ENCODE measurements at regions of chr2 and their contacts with region 1.

Region 1: DNA sequence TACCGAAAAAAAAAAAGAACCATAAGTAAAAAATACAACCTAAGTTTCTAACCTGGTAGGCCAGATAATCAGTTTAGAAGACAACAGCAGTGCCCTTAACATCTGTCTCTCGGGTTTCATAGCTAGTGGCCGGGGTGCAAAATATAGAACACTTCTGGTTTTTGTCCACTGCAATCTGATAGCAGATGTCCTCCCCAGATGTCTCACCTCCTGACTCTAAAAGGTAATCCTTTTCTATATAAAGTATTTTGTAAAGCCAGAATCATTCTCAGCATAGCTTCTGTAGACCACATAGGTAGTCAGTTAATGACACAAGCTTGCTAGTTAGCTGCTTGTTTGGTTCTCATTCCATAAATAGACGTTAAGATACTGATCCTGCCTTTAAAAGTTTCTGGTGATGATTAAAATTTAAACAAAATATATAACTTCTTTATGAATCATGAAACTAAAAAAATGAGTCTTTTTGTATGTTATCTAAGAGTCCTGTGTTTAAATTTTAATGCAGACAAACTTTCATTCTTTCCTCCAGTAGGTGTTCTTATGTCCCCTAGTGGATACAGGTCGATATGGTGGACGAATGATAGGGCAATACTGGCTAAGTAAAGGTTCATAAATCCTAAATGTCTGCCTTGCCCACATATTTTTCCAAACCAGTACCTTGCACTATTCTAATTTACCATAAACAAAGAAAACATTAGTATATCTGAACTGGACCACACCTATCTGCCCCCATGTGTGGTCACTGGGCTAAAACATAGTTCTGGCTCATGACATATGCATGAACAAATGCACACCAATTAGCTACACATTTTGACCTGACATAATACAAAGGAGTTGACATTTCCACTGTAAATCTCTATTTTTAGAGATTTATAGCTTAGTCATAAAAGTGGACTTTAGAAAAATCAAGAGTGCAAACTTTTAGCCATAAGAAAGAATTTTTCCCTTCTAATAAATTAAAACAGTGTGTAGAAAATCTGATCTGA is 171.0 kb downstream of the SRBD1 start:
- DNase-seq: no peak
- H3K4me3 ChIP-seq: no peak overlapping the region
- H3K27ac ChIP-seq: no peak overlapping the region
- H3K4me1 ChIP-seq: no peaks in the 10 kb centered on the region
- H3K27me3 ChIP-seq: no peaks in the 10 kb centered on the region
- CTCF ChIP-seq: no peak

Region 2: DNA sequence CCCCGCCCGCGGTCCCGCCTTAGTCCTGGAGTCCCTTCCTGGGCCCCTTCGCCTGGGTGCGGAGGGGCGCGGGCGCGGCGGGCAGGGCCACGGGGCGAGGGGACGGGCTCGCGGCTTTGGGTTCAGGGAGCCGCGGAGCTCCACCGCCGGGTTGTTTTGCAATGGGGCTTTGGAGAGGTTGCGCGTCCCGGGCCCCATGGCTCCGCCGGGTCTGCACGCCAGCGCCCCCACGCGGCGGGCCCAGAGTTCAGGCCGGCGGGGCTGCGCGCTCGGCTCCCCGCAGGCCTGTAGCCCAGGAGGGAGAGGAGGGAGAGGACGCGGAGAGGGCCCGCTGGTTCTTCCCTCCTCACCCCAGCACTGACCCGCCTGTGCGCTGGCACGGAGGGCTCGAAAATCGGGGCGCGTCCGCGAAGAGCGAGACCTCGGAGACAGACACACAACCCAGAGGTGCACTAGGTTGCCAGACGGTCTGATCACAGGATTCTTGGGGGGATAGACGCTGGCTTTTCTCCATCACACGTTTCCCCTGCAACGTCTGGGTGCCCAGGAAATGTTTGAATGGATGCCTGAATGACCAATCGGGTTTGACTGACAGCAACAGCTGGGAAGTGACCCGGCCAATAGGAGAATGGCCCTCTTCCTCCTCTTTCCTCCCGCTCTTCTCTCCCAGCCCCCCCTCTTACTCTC is 425.9 kb before region 1 on chr2:
- CTCF ChIA-PET with region 1: interaction called, 11 read pairs
- POLR2A ChIA-PET with region 1: no interaction called
- intact Hi-C with region 1: no loop called
- DNase-seq: peak; percentile 74
- H3K4me3 ChIP-seq: peak overlapping the region; percentile 52
- H3K27ac ChIP-seq: no peak overlapping the region
- H3K4me1 ChIP-seq: peaks cover 6% of the 10 kb centered on the region
- H3K27me3 ChIP-seq: peaks cover 50% of the 10 kb centered on the region
- CTCF ChIP-seq: peak; percentile 71

Region 3: DNA sequence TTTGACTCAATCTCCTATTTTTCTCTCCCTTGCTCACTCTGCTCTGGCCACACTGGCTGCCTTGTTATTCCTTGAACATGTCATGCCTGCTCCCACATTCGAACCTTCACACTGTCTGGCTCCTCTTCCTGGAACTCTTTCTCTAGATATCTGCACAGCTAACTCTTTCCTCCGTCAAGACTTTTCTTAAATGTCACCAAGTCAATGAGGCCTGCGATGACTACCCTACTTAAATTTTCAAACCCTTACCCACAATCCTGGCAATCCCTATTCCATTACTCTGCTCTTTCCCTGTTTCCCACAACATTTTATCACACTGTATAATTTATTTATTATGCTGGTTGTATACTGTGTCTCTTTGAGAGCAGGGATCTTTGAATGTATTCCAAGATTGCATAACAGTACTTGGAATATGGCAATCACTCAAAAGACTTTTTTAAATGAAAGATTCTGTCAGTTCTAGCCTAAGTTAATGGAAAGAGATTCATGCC is 35.2 kb before region 1 on chr2:
- CTCF ChIA-PET with region 1: no interaction called
- POLR2A ChIA-PET with region 1: no interaction called
- intact Hi-C with region 1: no loop called
- DNase-seq: no peak
- H3K4me3 ChIP-seq: no peak overlapping the region
- H3K27ac ChIP-seq: no peak overlapping the region
- H3K4me1 ChIP-seq: peaks cover 11% of the 10 kb centered on the region
- H3K27me3 ChIP-seq: no peaks in the 10 kb centered on the region
- CTCF ChIP-seq: no peak